ENCODE measurements at regions of chr13 and their contacts with region 1.

Region 1: DNA sequence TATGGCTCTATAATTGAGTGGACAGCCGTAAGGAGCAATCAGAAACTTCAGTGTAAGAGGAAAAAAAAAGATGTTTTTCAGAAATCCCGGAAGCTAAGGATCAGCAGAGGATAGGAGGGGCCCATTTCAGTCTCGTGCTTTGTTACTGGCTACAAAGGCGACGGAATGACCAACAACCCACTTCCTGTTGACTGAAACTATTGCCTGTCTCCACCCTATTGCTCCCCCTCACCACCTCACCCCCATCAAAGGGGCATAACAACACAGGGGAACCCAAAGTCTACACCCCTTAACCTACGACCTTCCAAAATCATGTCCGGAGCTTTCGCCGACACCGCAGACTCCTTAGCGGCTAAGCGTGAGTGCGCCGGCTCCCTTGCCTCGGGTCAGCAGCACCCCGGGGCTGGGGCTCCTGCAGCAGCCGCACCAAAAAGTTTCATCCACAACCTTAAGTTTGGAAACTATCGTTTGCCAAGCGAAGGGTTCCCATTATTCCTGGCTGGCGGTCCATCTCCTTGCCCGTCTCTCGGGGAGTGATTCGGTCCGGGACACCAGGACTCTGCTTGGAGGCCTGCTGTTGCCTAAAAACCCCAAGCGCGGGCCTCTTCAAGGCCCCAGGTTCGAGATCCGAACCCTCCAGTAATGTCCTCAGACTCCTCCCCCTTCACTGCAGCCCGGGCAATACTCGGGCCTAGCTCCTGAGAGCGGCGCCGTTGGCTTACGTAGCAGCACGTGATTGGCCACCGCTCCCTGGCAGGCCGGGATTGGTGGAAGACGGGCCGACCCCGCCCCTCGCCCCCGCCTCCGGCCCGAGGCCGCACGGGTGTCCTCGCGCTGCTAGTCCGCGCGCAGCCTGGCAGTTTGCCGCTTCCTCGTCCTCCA is at the start of gene TPP2:
- DNase-seq: peak; percentile 99
- ATAC-seq: peak; percentile 91
- H3K4me3 Mint-ChIP-seq: peak within 1 kb of the TSS; percentile 91
- H3K27ac Mint-ChIP-seq: peak within 1 kb of the TSS; percentile 100
- H3K4me1 Mint-ChIP-seq: peaks cover 58% of the 10 kb centered on the region
- H3K27me3 Mint-ChIP-seq: no peaks in the 10 kb centered on the region
- total RNA-seq, gene TPP2: 75.2 to 77.0 TPM

Region 2: GRCh38 chr13:101626925-101627555 is 969.3 kb before region 1 on chr13:
- CTCF ChIA-PET with region 1: no interaction called
- POLR2A ChIA-PET with region 1: no interaction called
- intact Hi-C with region 1: loop called in 1 of 2 experiments (anchors 10 kb)
- DNase-seq: peak; percentile 53
- ATAC-seq: peak; percentile 86
- H3K4me3 Mint-ChIP-seq: peak overlapping the region; percentile 1
- H3K27ac Mint-ChIP-seq: no peak overlapping the region
- H3K4me1 Mint-ChIP-seq: peaks cover 42% of the 10 kb centered on the region
- H3K27me3 Mint-ChIP-seq: peaks cover 13% of the 10 kb centered on the region

Region 3: DNA sequence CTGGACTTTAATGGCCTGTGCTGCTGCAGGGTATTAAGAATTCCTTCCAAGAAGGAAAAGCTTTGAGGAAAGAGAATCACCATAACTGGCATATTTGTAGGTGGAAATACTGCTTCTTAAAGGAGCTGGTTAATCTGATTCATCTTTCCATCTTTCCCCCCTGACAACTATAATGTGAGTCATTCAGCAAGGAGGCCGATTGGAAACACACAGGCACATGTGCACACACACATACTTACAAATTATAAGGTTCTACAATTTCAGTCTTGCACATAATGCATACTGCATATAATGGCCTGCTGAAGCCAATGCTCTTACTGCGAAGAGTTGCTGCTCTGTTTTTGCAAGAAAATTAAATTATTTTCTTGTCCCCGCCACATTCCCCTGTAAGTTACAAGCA is 78.4 kb before region 1 on chr13:
- CTCF ChIA-PET with region 1: no interaction called
- POLR2A ChIA-PET with region 1: no interaction called
- intact Hi-C with region 1: no loop called
- DNase-seq: no peak
- ATAC-seq: no peak
- H3K4me3 Mint-ChIP-seq: no peak overlapping the region
- H3K27ac Mint-ChIP-seq: no peak overlapping the region
- H3K4me1 Mint-ChIP-seq: peaks cover 3% of the 10 kb centered on the region
- H3K27me3 Mint-ChIP-seq: peaks cover 12% of the 10 kb centered on the region

Region 4: DNA sequence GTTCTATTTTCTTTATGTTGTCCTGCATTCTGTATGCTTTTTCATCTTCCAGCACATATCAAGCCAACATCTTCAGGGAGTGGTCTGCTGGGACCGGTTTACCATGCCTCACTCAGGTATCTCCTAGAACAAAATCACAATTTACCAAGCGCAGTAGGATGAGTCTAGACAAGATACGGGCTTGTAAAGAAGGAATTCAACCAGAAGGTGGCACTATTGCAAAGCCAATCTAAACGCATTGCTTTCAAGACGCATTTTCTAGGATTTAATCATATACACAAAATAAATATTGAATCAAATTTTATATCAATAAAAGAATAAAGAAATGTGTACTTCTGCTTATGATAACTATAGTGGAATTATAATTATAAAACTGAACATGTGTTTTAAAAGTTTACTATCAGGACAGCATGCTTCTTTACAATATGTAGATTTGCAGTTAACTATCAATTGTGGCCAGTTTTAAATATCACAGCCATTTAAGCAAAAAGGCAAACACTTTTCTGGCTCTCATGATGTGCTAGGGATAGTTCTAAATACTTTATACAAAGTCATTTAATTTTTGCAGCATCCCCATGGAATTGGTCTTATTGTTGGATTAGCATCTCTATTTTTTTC is 15.7 kb before region 1 on chr13:
- CTCF ChIA-PET with region 1: interaction called, 15 read pairs
- POLR2A ChIA-PET with region 1: no interaction called
- intact Hi-C with region 1: no loop called
- DNase-seq: peak; percentile 35
- ATAC-seq: peak; percentile 78
- H3K4me3 Mint-ChIP-seq: no peak overlapping the region
- H3K27ac Mint-ChIP-seq: no peak overlapping the region
- H3K4me1 Mint-ChIP-seq: peaks cover 7% of the 10 kb centered on the region
- H3K27me3 Mint-ChIP-seq: peaks cover 7% of the 10 kb centered on the region

Region 5: GRCh38 chr13:102773441-102774215 is 177.2 kb after region 1 on chr13 and contains the start of gene TEX30:
- CTCF ChIA-PET with region 1: interaction called, 5 read pairs
- POLR2A ChIA-PET with region 1: interaction called, 11 read pairs
- intact Hi-C with region 1: loop called (anchors 1 kb)
- DNase-seq: peak; percentile 91
- ATAC-seq: peak; percentile 97
- H3K4me3 Mint-ChIP-seq: peak within 1 kb of the TSS; percentile 73
- H3K27ac Mint-ChIP-seq: peak within 1 kb of the TSS; percentile 93
- H3K4me1 Mint-ChIP-seq: peaks cover 48% of the 10 kb centered on the region
- H3K27me3 Mint-ChIP-seq: no peaks in the 10 kb centered on the region
- total RNA-seq, gene TEX30: 21.5 to 25.8 TPM

Region 6: DNA sequence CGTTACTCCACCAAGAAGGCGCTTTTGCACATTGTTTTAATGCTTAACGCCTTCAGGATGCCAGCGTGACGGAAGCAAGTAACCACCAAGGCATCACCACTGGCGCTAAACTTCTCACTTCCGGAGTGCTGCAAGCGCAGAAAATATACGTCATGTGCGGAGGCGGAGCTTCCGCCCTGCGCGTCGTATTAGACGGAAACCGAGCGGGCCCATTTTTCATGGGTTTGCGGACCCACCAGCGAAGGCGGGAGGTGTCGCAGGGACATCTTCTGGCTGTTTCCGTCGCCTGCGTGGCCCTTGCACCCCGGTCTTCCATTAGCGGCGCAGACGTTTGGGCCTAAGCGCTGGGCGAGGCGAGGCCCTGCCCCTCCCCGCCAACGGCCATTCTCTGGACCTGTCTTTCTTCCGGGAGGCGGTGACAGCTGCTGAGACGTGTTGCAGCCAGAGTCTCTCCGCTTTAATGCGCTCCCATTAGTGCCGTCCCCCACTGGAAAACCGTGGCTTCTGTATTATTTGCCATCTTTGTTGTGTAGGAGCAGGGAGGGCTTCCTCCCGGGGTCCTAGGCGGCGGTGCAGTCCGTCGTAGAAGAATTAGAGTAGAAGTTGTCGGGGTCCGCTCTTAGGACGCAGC is 249.4 kb after region 1 on chr13 and contains the start of gene ERCC5:
- CTCF ChIA-PET with region 1: interaction called, 16 read pairs
- POLR2A ChIA-PET with region 1: interaction called, 17 read pairs
- intact Hi-C with region 1: loop called (anchors 1 kb)
- DNase-seq: peak; percentile 97
- ATAC-seq: peak; percentile 87
- H3K4me3 Mint-ChIP-seq: peak within 1 kb of the TSS; percentile 99
- H3K27ac Mint-ChIP-seq: peak within 1 kb of the TSS; percentile 98
- H3K4me1 Mint-ChIP-seq: peaks cover 32% of the 10 kb centered on the region
- H3K27me3 Mint-ChIP-seq: no peaks in the 10 kb centered on the region
- total RNA-seq, gene ERCC5: 74.8 to 79.1 TPM